T-cell (primary cell): ENCODE measurements at regions of chr19 and their contacts with region 1.

Region 1: GRCh38 chr19:39846176-39846677 is at the start of gene FBL:
- DNase-seq: peak; percentile 90 to 99 (median 96)
- ATAC-seq: peak; percentile 92 to 94 (median 94)
- H3K4me3 ChIP-seq: peak within 1 kb of the TSS; percentile 85 to 92
- H3K4me3 Mint-ChIP-seq: peak within 1 kb of the TSS; percentile 83 to 87 (median 87)
- H3K27ac ChIP-seq: peak within 1 kb of the TSS; percentile 92
- H3K27ac Mint-ChIP-seq: peak within 1 kb of the TSS; percentile 91 to 95
- H3K4me1 ChIP-seq: peaks cover 7 to 44% of the 10 kb centered on the region in 2 experiments
- H3K4me1 Mint-ChIP-seq: peaks cover 50 to 54% (median 53%) of the 10 kb centered on the region in 3 donors
- H3K27me3 ChIP-seq: no peaks in the 10 kb centered on the region
- H3K27me3 Mint-ChIP-seq: no peaks in the 10 kb centered on the region
- total RNA-seq, gene FBL: 291 to 348 (median 299) TPM

Region 2: GRCh38 chr19:39792999-39793546 is 53.2 kb before region 1 on chr19:
- CTCF ChIA-PET with region 1: interaction called, 13 to 69 read pairs
- POLR2A ChIA-PET with region 1: interaction called in 1 of 2 experiments, 3 read pairs
- DNase-seq: peak; percentile 20 to 82 (median 64)
- ATAC-seq: peak; percentile 91 to 97 (median 93)
- H3K4me3 ChIP-seq: peak overlapping the region; percentile 55 to 66
- H3K4me3 Mint-ChIP-seq: peak overlapping the region; percentile 63 to 74 (median 66)
- H3K27ac ChIP-seq: no peak overlapping the region
- H3K27ac Mint-ChIP-seq: no peak overlapping the region
- H3K4me1 ChIP-seq: peaks cover 0 to 10% of the 10 kb centered on the region in 2 experiments
- H3K4me1 Mint-ChIP-seq: peaks cover 0 to 4% (median 0%) of the 10 kb centered on the region in 3 donors
- H3K27me3 ChIP-seq: no peaks in the 10 kb centered on the region
- H3K27me3 Mint-ChIP-seq: peaks cover 2 to 3% of the 10 kb centered on the region in 2 donors

Region 3: DNA sequence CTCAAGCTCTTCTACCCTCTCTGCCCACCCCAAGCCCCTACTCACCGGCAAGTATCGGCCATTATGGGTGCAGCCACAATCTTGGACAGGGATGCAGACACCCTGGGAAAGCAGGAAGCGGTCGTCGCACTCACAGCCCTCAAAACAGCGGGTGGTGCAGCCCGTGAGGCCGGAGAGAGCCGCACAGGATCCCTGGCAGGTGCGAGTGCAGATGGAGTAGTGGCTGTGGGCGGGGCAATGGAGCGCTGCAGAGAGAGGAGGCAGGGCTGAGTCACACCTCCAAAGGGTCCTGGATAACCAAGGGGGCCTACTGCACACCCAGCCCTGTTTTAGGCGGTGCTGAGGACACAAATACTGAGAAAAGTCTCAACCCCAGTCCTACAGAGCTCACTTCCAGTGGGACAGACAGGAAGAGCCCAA is 24.0 kb after region 1 on chr19:
- CTCF ChIA-PET with region 1: no interaction called
- POLR2A ChIA-PET with region 1: no interaction called
- DNase-seq: no peak
- ATAC-seq: no peak
- H3K4me3 ChIP-seq: no peak overlapping the region
- H3K4me3 Mint-ChIP-seq: no peak overlapping the region
- H3K27ac ChIP-seq: no peak overlapping the region
- H3K27ac Mint-ChIP-seq: no peak overlapping the region
- H3K4me1 ChIP-seq: no peaks in the 10 kb centered on the region
- H3K4me1 Mint-ChIP-seq: no peaks in the 10 kb centered on the region
- H3K27me3 ChIP-seq: no peaks in the 10 kb centered on the region
- H3K27me3 Mint-ChIP-seq: no peaks in the 10 kb centered on the region